Heart left ventricle (tissue), 16 donors: ENCODE measurements at regions of chr3 and their contacts with region 1.

Region 1: GRCh38 chr3:61864886-61865285 is 303.5 kb downstream of the PTPRG start:
- DNase-seq: no peak
- ATAC-seq: no peak
- H3K4me3 ChIP-seq: no peak overlapping the region
- H3K27ac ChIP-seq: no peak overlapping the region
- H3K4me1 ChIP-seq: peaks cover 0 to 64% (median 28%) of the 10 kb centered on the region in 12 donors
- H3K27me3 ChIP-seq: no peaks in the 10 kb centered on the region
- CTCF ChIP-seq: no peak
- POLR2A ChIP-seq: no peak

Region 2: GRCh38 chr3:61505197-61505596 is 359.7 kb before region 1 on chr3:
- intact Hi-C with region 1: no loop called
- DNase-seq: no peak
- ATAC-seq: no peak
- H3K4me3 ChIP-seq: no peak overlapping the region
- H3K27ac ChIP-seq: no peak overlapping the region
- H3K4me1 ChIP-seq: no peaks in the 10 kb centered on the region
- H3K27me3 ChIP-seq: no peaks in the 10 kb centered on the region
- CTCF ChIP-seq: no peak
- POLR2A ChIP-seq: no peak

Region 3: DNA sequence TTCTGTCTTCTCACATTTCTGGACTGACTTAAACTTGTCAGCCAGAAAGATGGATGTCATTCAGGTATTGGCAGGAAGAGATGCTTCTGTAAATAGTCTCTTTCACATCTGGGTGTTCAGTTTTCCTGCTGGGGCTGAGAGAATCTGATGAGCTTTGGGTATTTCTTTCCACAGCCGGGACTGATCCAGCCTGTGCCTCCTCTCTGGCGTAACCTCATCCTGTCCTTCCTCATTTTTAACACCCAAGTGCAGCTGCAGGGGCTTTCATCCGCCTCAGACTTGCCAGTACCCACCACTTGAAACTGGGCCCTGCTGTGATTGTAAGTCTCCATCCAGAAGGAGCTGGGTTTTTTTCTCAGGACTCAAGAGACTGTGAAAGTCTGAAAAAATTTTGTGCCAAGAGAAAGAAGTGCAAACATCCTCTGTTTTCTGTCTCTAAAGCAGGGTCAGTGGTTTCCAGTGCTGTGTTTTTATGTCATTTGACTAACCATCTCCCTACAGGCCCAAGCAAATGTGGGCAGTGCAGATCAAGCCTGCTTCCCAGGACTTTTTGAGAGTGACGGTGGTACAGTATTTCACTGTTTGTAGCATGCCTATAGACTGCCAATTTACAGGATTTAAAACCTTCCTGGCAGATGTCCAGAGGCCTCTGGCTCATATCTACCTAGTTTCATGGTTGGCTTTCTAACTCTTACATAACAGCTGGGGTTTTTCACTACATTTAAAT is 39.2 kb after region 1 on chr3:
- intact Hi-C with region 1: loop called in 1 of 10 experiments (anchors 5 kb)
- DNase-seq: peak in 2 of 5 donors; percentile 34 to 35
- ATAC-seq: peak; percentile 37 to 76 (median 70)
- H3K4me3 ChIP-seq: no peak overlapping the region
- H3K27ac ChIP-seq: peak overlapping the region in 11 of 12 donors; percentile 40 to 73 (median 58)
- H3K4me1 ChIP-seq: peaks cover 0 to 63% (median 34%) of the 10 kb centered on the region in 12 donors
- H3K27me3 ChIP-seq: no peaks in the 10 kb centered on the region
- CTCF ChIP-seq: no peak
- POLR2A ChIP-seq: no peak

Region 4: GRCh38 chr3:61927332-61927731 is 62.4 kb after region 1 on chr3:
- intact Hi-C with region 1: loop called in 3 of 10 experiments (anchors 5 to 10 kb)
- DNase-seq: peak; percentile 77 to 90 (median 86)
- ATAC-seq: peak; percentile 90 to 93 (median 92)
- H3K4me3 ChIP-seq: peak overlapping the region in 3 of 12 donors; percentile 6 to 30 (median 13)
- H3K27ac ChIP-seq: peak overlapping the region; percentile 29 to 91 (median 76)
- H3K4me1 ChIP-seq: peaks cover 9 to 73% (median 50%) of the 10 kb centered on the region in 12 donors
- H3K27me3 ChIP-seq: no peaks in the 10 kb centered on the region
- CTCF ChIP-seq: no peak
- POLR2A ChIP-seq: no peak

Region 5: GRCh38 chr3:62027796-62028195 is 162.9 kb after region 1 on chr3:
- intact Hi-C with region 1: loop called in 1 of 10 experiments (anchors 5 kb)
- DNase-seq: no peak
- ATAC-seq: no peak
- H3K4me3 ChIP-seq: no peak overlapping the region
- H3K27ac ChIP-seq: no peak overlapping the region
- H3K4me1 ChIP-seq: peaks cover 0 to 26% (median 8%) of the 10 kb centered on the region in 12 donors
- H3K27me3 ChIP-seq: no peaks in the 10 kb centered on the region
- CTCF ChIP-seq: no peak
- POLR2A ChIP-seq: no peak

Region 6: GRCh38 chr3:62131592-62131991 is 266.7 kb after region 1 on chr3:
- intact Hi-C with region 1: loop called in 2 of 10 experiments (anchors 10 kb)
- DNase-seq: no peak
- ATAC-seq: no peak
- H3K4me3 ChIP-seq: no peak overlapping the region
- H3K27ac ChIP-seq: no peak overlapping the region
- H3K4me1 ChIP-seq: peaks cover 5 to 51% (median 27%) of the 10 kb centered on the region in 12 donors
- H3K27me3 ChIP-seq: no peaks in the 10 kb centered on the region
- CTCF ChIP-seq: peak in 11 of 12 donors; percentile 13 to 59 (median 51)
- POLR2A ChIP-seq: no peak